ENCODE measurements at regions of chr7 and their contacts with region 1.

Region 1: DNA sequence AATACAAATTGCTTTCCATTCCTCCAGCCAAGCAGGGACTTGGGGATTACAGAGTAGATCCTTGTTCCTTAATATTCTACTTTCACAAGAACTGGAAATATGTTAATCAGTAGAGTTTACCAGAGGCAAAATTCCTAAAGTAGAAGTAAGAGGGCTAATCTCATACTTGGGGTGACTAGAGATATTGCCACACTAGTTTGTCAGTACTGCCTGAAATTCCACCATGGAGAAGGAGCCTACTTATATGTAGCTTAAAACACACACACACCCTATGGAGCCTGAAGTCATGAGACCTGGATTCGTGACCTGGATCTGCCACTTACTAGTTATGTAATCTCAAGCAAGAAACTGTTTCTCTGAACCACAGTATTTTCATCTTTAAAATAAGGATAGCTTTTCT is 33.9 kb downstream of the STRIP2 start:
- DNase-seq: no peak
- ATAC-seq: no peak
- H3K4me3 ChIP-seq: no peak overlapping the region
- H3K27ac ChIP-seq: peak overlapping the region in 1 of 12 donors; percentile 23
- H3K4me1 ChIP-seq: peaks cover 0 to 4% (median 0%) of the 10 kb centered on the region in 12 donors
- H3K27me3 ChIP-seq: no peaks in the 10 kb centered on the region
- CTCF ChIP-seq: no peak
- POLR2A ChIP-seq: no peak

Region 2: GRCh38 chr7:129210256-129210988 is 257.7 kb before region 1 on chr7:
- intact Hi-C with region 1: loop called in 5 of 10 experiments (anchors 5 to 10 kb)
- DNase-seq: peak; percentile 75 to 89 (median 84)
- ATAC-seq: peak; percentile 72 to 93 (median 91)
- H3K4me3 ChIP-seq: no peak overlapping the region
- H3K27ac ChIP-seq: no peak overlapping the region
- H3K4me1 ChIP-seq: peaks cover 0 to 4% (median 0%) of the 10 kb centered on the region in 12 donors
- H3K27me3 ChIP-seq: no peaks in the 10 kb centered on the region
- CTCF ChIP-seq: peak; percentile 71 to 89 (median 84)
- POLR2A ChIP-seq: no peak

Region 3: DNA sequence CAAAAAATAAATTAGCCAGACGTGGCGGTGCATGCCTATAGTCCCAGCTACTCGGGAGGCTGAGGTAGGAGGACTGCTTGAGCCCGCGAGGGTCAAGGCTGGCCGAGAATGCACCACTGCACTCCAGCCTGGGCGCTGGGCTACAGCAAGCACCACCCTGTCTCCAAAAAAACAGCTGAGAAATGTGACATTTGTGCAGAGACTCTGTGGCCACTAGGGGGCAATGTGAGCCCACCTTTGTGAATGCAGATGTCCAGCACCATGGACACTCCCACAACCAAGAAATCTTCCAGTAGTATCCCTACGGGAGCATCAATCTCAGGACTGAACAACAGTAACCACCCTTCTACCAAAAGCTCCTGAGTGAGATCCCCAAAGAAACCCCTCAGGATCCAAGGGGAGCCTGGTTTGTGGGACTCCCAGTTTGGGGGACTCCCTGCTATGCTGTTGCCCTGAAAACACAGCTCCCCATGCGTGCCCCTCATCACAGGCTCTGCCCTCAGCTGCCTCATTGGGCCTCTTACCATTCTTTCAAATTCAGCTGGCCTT is 249.5 kb before region 1 on chr7:
- intact Hi-C with region 1: loop called (anchors 1 to 10 kb)
- DNase-seq: peak; percentile 81 to 92 (median 84)
- ATAC-seq: peak; percentile 81 to 92 (median 90)
- H3K4me3 ChIP-seq: no peak overlapping the region
- H3K27ac ChIP-seq: no peak overlapping the region
- H3K4me1 ChIP-seq: peaks cover 0 to 16% (median 0%) of the 10 kb centered on the region in 12 donors
- H3K27me3 ChIP-seq: peaks cover 0 to 6% (median 0%) of the 10 kb centered on the region in 9 donors
- CTCF ChIP-seq: peak; percentile 81 to 96 (median 92)
- POLR2A ChIP-seq: no peak

Region 4: DNA sequence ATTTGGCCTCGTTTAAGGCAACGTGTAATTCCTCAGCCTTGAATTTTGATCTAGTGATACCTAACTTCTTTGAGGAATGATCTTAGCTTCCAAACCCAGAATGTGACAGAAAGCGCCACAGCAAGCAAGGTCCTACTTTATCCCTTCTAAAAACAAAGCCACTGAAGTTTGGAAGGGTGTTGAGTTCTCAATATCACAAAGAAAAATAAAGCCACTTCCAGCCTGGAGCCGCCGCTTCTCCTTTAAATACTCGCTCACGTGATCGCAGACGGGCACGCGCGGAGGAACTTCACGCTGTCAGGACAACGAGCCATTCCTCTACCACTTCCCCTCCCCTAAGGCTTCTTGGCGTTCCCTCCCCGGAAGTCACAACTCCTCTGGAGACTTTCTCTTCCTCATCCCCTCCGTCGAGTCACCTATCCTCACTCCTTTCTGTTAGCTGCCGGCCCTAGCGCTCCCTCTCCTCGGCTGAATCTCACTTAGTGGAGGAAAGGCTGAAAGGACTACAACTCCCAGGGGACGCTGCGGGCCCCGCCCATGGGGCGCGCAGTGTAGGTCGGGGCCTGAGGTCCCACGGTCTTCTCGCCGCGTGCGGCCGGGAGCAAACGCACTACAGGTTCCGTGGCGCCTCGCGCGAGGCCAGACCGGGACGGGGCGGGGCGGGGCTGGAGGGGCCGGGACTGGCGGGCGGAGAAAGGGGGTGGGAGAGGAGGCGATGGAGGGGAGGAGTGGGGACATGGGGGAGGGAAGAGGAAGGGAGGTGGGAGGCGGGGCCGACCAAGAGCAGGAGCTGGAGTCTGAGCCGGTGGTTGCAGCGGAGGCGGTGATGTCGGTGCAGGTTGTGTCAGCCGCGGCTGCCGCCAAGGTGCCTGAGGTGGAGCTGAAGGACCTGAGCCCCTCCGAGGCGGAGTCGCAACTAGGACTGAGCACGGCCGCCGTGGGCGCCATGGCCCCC is 243.6 kb before region 1 on chr7 and contains the start of gene AHCYL2:
- intact Hi-C with region 1: loop called in 7 of 10 experiments (anchors 2 to 10 kb)
- DNase-seq: peak; percentile 98 to 99 (median 99)
- ATAC-seq: peak; percentile 99 to 100 (median 99)
- H3K4me3 ChIP-seq: peak within 1 kb of the TSS; percentile 71 to 99 (median 85)
- H3K27ac ChIP-seq: peak within 1 kb of the TSS; percentile 90 to 99 (median 95)
- H3K4me1 ChIP-seq: peaks cover 0 to 31% (median 9%) of the 10 kb centered on the region in 12 donors
- H3K27me3 ChIP-seq: no peaks in the 10 kb centered on the region
- CTCF ChIP-seq: no peak
- POLR2A ChIP-seq: peak in 1 of 2 donors; percentile 25
- total RNA-seq, gene AHCYL2: 3.6 to 7.6 (median 6.5) TPM

Region 5: GRCh38 chr7:129367700-129368388 is 100.2 kb before region 1 on chr7:
- intact Hi-C with region 1: loop called (anchors 1 to 5 kb)
- DNase-seq: peak; percentile 54 to 78 (median 73)
- ATAC-seq: peak; percentile 62 to 88 (median 88)
- H3K4me3 ChIP-seq: peak overlapping the region in 6 of 12 donors; percentile 6 to 25 (median 18)
- H3K27ac ChIP-seq: no peak overlapping the region
- H3K4me1 ChIP-seq: peaks cover 0 to 14% (median 5%) of the 10 kb centered on the region in 12 donors
- H3K27me3 ChIP-seq: no peaks in the 10 kb centered on the region
- CTCF ChIP-seq: peak; percentile 78 to 94 (median 86)
- POLR2A ChIP-seq: no peak

Region 6: DNA sequence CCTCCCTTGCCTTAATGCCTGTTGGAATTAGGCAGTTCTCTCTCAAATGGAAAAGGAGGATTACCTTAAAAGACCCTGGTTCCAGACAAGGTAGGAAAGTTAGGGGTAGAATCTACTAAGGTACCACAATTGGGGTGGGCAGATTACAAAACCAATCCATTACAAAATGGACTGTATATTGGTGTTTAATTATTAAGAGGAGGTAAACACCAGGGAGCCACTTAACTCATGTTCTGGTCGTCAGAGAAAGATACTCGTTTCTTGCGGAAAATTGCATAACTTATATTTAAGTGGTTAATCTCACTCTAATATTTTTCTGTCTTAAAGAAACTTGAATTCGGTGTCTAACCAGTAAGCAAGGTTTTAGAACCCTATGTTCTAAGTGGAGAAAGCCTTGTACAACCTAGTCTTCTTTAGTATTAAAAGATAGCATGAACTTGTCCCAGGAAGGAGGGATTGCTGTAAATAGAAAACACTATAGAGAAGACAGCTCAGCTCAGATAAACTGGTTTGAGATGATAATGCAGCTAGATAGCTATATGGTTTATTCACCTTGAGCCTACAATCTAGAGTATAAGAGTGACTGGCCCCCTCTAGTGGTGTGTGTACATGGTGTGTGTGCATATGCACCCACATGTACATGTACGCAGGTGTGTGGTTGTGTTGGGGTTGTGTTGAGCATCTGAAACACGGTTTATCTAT is 91.9 kb before region 1 on chr7:
- intact Hi-C with region 1: loop called in 2 of 10 experiments (anchors 2 kb)
- DNase-seq: no peak
- ATAC-seq: peak in 2 of 4 donors; percentile 54 to 62
- H3K4me3 ChIP-seq: no peak overlapping the region
- H3K27ac ChIP-seq: no peak overlapping the region
- H3K4me1 ChIP-seq: peaks cover 0 to 8% (median 0%) of the 10 kb centered on the region in 12 donors
- H3K27me3 ChIP-seq: no peaks in the 10 kb centered on the region
- CTCF ChIP-seq: peak; percentile 27 to 60 (median 43)
- POLR2A ChIP-seq: no peak

Region 7: GRCh38 chr7:129514683-129515082 is 46.6 kb after region 1 on chr7:
- intact Hi-C with region 1: no loop called
- DNase-seq: no peak
- ATAC-seq: no peak
- H3K4me3 ChIP-seq: no peak overlapping the region
- H3K27ac ChIP-seq: no peak overlapping the region
- H3K4me1 ChIP-seq: no peaks in the 10 kb centered on the region
- H3K27me3 ChIP-seq: peaks cover 0 to 15% (median 0%) of the 10 kb centered on the region in 9 donors
- CTCF ChIP-seq: no peak
- POLR2A ChIP-seq: no peak

Region 8: DNA sequence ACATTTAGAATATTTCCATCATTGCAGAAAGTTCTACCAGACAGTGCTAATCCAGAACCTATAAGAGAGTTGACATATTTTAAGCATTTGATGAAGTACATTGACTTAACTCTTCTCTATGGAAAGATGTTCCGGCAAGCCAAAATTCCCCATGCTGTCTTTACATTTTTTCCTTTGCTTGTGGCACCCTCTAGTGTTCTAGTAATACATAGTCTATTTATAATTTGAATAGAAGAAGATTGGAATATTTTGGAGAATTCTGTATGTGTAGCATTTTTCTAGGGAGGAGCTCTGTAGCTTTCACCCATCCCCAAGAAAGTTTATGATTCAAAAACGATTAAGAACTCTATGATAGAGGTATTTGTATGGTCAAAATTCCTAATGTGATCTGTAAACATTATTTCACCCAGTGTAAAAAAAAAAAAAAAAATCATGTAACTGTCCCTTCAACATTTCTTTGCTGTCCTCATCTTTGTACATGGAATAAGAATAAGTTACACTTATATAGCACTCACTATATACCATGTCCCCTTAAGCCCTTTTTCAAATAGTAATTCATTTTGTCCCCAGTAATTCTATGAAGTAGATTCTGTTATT is 176.6 kb after region 1 on chr7:
- intact Hi-C with region 1: loop called in 2 of 10 experiments (anchors 10 kb)
- DNase-seq: no peak
- ATAC-seq: peak in 2 of 4 donors; percentile 37 to 44
- H3K4me3 ChIP-seq: no peak overlapping the region
- H3K27ac ChIP-seq: no peak overlapping the region
- H3K4me1 ChIP-seq: peaks cover 0 to 36% (median 15%) of the 10 kb centered on the region in 12 donors
- H3K27me3 ChIP-seq: no peaks in the 10 kb centered on the region
- CTCF ChIP-seq: peak in 11 of 12 donors; percentile 26 to 62 (median 47)
- POLR2A ChIP-seq: no peak